ENCODE measurements at regions of chr21 and their contacts with region 1.

Region 1: GRCh38 chr21:22691658-22692057 is 1693.4 kb downstream of the NCAM2 start:
- H3K4me3 Mint-ChIP-seq: no peak overlapping the region
- H3K27ac Mint-ChIP-seq: no peak overlapping the region
- H3K4me1 Mint-ChIP-seq: no peaks in the 10 kb centered on the region
- H3K27me3 Mint-ChIP-seq: no peaks in the 10 kb centered on the region

Region 2: DNA sequence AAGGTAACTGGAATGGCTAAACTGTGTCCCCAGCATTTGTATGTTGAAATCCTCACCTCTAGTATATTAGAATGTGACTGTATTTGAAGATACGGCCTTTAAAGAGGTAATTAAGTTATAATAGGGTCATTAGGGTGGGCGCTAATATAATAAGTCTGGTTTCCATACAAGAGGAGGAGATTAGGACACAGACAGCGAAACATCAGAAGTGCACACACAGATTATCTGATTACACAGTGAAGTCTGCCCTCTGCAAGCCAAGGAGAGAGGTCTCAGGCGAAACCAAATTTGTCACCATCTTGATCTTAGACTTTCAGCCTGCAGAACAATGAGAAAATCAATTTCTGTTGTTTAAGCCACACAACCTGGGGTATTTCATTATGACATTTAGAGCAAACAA is 682.5 kb after region 1 on chr21:
- intact Hi-C with region 1: loop called (anchors 10 kb)
- H3K4me3 Mint-ChIP-seq: no peak overlapping the region
- H3K27ac Mint-ChIP-seq: no peak overlapping the region
- H3K4me1 Mint-ChIP-seq: no peaks in the 10 kb centered on the region
- H3K27me3 Mint-ChIP-seq: no peaks in the 10 kb centered on the region

Measured in dendritic cell treated with granulocyte-macrophage colony-stimulating factor and Interleukin-4, amounts not matched to agents 40 ng/mL and 50 ng/mL, for 4 days (primary cell).